ENCODE measurements at regions of chr2 and their contacts with region 1.

Region 1: GRCh38 chr2:127637725-127638252 is 8.2 kb upstream of the GPR17 start:
- DNase-seq: peak; percentile 55
- ATAC-seq: peak; percentile 1

Region 2: GRCh38 chr2:127675331-127676261 is 37.8 kb after region 1 on chr2 and contains the start of gene LIMS2:
- intact Hi-C with region 1: loop called (anchors 5 kb)
- DNase-seq: peak; percentile 75
- ATAC-seq: peak; percentile 60
- total RNA-seq, gene LIMS2: 237 TPM